H1 (cell line): ENCODE measurements at regions of chr17 and their contacts with region 1.

Region 1: GRCh38 chr17:67200720-67201301 is 44.2 kb downstream of the HELZ start:
- DNase-seq: no peak
- H3K4me3 ChIP-seq: no peak overlapping the region
- H3K27ac ChIP-seq: no peak overlapping the region
- H3K4me1 ChIP-seq: no peaks in the 10 kb centered on the region
- H3K27me3 ChIP-seq: no peaks in the 10 kb centered on the region
- CTCF ChIP-seq: peak; percentile 30 to 60 (median 44); a peak in 3 of 4 replicates
- EP300 ChIP-seq: no peak
- POLR2A ChIP-seq: no peak
- RAD21 ChIP-seq: peak in 1 of 2 experiments; percentile 25; a peak in 1 of 4 replicates

Region 2: DNA sequence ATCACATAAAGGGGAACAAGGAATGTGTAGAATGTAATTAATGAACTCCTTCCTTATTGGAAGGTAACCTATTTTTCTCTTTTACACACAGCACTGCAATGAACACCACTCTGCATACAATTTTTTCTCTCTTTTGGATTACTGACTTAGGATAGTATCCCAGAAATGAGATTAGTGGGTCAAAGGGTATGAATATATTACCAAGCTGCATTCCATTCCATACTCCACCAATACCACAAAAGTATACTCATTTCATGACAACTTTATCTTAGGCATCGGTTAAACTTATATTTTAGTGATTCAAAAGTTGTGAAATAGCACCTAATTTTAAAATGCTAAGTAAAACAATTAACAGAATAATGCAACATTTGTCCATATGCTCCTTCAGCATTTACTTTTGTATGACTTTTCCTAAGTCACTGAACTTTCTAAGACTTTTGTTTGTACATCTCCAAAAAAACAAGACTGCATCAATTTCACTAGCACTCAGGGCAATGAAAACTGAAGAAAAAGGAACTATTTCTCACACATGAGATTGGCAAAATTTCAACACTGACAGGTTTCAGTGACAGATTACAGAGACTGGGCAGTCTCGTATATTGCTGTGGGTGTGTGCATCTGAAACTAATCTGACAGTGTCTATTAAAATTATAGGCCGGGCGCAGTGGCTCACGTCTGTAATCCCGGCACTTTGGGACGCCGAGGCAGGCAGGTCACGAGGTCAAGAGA is 12.0 kb after region 1 on chr17:
- CTCF ChIA-PET with region 1: interaction called, 45 read pairs
- POLR2A ChIA-PET with region 1: interaction called, 3 read pairs
- DNase-seq: no peak
- H3K4me3 ChIP-seq: no peak overlapping the region
- H3K27ac ChIP-seq: no peak overlapping the region; the same call in 1 of the 2 replicates
- H3K4me1 ChIP-seq: no peaks in the 10 kb centered on the region
- H3K27me3 ChIP-seq: no peaks in the 10 kb centered on the region
- CTCF ChIP-seq: no peak
- EP300 ChIP-seq: no peak
- POLR2A ChIP-seq: no peak
- RAD21 ChIP-seq: no peak

Region 3: DNA sequence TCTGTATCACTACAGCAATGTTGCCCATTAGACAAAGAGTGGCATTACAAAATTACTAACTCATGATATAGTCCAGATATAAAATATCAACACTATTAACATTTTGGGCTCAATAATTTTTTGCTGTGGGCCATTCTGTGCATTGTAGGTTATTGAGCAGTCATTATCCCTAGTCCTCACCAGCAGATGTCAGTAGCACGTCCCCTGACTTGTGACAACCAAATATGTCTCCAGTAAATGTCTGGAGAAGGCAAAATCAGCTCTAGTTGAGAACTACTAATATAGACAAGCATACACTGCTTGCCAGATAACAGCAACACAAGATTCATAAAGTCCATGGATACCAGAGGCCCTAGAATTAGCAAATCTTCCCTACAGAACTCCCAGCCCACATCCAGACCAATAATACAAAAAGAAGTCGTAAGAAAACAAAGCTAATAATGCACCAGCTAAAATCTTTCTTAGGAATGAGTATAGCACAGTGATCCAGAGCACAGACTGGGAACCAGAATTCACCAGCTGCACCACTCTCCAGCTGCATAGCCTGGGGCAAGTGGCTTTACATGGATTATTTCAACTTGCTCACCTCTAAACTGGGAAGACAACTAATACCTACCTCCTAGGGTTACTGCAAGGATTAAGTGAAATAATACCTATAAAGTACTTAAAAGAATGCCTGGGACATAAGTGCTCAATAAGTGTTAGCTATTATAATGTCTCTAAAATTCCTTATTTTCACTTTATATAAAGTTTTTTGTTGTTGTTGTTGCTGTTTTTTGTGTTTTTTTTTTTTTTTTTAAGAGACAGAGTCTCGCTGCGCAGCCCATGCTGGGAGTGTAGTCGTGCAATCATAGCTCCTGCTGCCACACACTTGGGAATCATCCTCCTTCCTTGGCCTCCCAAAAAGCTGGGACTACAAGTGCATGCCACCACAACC is 20.5 kb after region 1 on chr17:
- CTCF ChIA-PET with region 1: interaction called, 45 read pairs
- POLR2A ChIA-PET with region 1: interaction called, 3 read pairs
- DNase-seq: no peak
- H3K4me3 ChIP-seq: no peak overlapping the region
- H3K27ac ChIP-seq: no peak overlapping the region
- H3K4me1 ChIP-seq: no peaks in the 10 kb centered on the region
- H3K27me3 ChIP-seq: no peaks in the 10 kb centered on the region
- CTCF ChIP-seq: peak in 2 of 3 experiments; percentile 27 to 40; a peak in 2 of 4 replicates
- EP300 ChIP-seq: no peak
- POLR2A ChIP-seq: no peak
- RAD21 ChIP-seq: peak; percentile 40 to 51

Region 4: DNA sequence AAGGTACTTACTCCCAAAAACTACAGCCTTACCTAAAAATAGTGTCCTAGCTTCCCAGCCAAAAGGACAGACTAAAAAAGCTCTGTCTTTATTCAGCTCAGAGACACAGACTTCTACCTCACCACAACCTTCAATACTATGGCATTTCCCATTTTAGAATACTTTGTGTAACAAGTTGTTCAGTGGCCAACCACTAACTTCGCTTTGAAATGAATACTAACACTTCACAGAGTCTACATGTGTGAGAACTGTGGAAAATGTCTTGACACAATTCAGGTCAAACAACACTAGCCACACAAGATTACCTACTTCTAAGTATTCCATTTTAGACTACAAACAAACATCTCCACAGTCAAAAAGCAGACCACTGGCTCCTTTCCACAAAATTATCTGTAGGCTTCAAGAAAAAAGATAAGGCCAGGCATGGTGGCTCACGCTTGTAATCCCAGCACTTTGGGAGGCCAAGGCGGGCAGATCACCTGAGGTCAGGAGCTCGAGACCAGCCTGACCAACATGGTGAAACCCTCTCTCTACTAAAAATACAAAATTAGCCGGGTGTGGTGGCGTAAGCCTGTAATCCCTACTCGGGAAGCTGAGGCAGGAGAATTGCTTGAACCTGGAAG is 41.0 kb after region 1 on chr17:
- CTCF ChIA-PET with region 1: no interaction called
- POLR2A ChIA-PET with region 1: no interaction called
- DNase-seq: peak in 1 of 2 experiments; percentile 27
- H3K4me3 ChIP-seq: no peak overlapping the region
- H3K27ac ChIP-seq: no peak overlapping the region
- H3K4me1 ChIP-seq: peaks cover 3 to 6% (median 4%) of the 10 kb centered on the region in 4 experiments; a peak in 6 of 7 replicates
- H3K27me3 ChIP-seq: no peaks in the 10 kb centered on the region
- CTCF ChIP-seq: no peak
- EP300 ChIP-seq: no peak
- POLR2A ChIP-seq: no peak
- RAD21 ChIP-seq: no peak